Colonic mucosa (tissue), 4 donors: ENCODE measurements at regions of chr10 and their contacts with region 1.

Region 1: DNA sequence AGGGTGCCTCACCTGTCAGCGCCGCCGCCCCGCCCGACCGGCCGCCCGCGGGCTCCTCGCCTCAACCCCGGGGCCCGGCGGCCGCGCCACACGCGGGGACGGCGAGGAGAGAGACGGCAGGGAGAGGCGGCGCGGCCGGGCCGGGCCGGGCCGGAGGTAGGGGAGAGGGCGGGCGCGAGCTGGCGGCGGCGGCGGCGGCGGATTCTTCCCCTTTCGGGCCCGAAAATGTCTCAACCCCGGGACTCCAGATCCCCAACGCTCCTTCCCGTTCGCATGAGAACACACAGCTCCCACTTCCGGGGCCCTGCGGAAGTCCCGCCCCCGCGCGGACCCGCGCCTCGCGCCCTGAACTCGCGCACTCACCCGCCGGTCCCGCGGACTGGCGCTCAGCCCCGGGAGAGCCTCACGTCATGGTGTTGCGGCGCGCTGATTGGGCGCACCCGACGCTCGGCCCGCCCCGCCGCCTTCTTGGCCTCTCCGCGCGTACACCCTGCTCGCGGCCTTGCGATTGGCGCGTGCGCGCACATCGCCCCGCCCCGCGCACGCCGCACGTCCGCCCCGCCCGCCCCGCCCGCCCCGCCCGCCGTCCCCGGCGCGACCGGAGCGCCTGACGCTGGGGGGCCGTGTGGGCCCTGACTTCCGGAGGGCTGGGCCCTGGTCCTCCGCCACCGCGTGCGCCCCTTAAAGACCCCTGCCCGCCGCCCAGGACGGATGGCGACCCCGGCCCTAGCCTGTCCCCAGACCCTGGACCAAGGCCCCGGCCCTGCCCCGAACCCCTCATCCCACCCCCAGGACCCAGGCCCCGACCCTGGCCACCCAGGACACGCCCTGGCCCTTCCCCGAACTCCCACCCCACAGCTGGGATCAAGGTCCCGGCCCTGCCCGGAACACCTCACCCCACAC is at the start of gene LARP4B:
- DNase-seq: peak; percentile 97
- H3K4me3 ChIP-seq: peak within 1 kb of the TSS; percentile 49
- H3K27ac ChIP-seq: peak within 1 kb of the TSS; percentile 73
- H3K4me1 ChIP-seq: peaks cover 6% of the 10 kb centered on the region
- H3K27me3 ChIP-seq: no peaks in the 10 kb centered on the region
- CTCF ChIP-seq: no peak
- total RNA-seq, gene LARP4B: 129 to 136 TPM

Region 2: DNA sequence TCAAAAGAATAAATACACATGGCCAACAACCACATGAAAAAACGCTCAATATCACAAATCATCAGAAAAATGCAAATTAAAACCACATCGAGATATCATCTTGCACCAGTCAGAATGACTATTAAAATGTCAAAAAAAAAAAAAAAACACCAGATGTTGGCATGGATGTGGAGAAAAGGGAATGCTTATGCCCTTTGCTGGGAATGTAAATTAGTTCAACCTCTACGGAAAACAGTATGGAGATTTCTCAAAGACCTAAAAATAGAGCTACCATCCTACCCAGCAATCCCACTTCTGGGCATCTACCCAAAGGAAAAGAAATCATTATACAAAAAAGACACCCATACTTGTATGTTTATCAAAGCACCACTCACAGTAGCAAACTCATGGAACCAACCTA is 197.2 kb before region 1 on chr10:
- intact Hi-C with region 1: no loop called
- DNase-seq: no peak
- H3K4me3 ChIP-seq: no peak overlapping the region
- H3K27ac ChIP-seq: no peak overlapping the region
- H3K4me1 ChIP-seq: no peaks in the 10 kb centered on the region
- H3K27me3 ChIP-seq: no peaks in the 10 kb centered on the region
- CTCF ChIP-seq: no peak

Region 3: DNA sequence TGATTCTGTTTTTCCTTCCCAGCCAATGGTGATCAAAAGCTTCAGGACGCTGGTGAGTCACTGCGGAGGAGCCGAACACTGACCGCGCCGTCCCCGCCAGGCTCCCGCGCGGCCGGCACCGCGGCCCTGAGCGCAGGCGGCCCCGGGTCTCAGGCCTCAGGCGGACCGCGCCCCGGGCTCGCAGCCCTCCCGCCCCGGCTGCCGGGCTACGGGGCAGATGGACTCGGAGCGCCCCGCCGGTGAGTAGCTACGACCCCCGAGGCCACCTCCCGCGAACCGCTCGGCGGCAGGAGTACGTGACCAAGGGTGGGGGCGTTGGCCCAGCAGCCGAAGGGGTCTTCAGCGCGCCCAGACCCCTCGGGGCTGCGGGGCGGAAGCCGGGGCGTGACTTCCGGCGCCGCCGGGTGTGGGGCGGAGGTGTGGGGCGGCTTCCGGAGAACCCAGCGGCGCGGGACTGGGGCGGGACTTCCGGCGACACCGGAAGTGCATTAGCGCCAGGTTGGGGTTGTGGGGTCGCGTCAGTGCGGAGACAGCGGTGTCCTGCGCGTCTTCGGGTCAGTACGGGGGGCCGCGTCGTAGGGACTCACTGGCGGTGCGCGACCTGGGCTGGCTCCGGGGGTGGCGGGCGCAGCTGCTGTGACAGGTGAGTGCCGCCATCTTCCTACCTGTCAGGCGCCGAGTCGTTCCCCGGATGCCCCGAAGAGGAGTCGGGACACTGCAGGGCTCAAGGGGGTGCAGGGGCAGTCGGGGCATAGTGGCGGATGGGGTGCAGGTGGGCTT is 124.8 kb after region 1 on chr10 and contains the start of gene WDR37:
- intact Hi-C with region 1: loop called (anchors 10 kb)
- DNase-seq: peak; percentile 92
- H3K4me3 ChIP-seq: peak within 1 kb of the TSS; percentile 95
- H3K27ac ChIP-seq: peak within 1 kb of the TSS; percentile 99
- H3K4me1 ChIP-seq: peaks cover 14% of the 10 kb centered on the region
- H3K27me3 ChIP-seq: no peaks in the 10 kb centered on the region
- CTCF ChIP-seq: no peak
- total RNA-seq, gene WDR37: 18.6 to 18.7 TPM